ENCODE measurements at regions of chr11 and their contacts with region 1.

Region 1: GRCh38 chr11:130434521-130435223 is 6.3 kb upstream of the ADAMTS8 start:
- DNase-seq: peak; percentile 65
- H3K4me3 Mint-ChIP-seq: no peak overlapping the region
- H3K27ac Mint-ChIP-seq: no peak overlapping the region
- H3K4me1 Mint-ChIP-seq: peaks cover 27% of the 10 kb centered on the region
- H3K27me3 Mint-ChIP-seq: peaks cover 18% of the 10 kb centered on the region

Region 2: DNA sequence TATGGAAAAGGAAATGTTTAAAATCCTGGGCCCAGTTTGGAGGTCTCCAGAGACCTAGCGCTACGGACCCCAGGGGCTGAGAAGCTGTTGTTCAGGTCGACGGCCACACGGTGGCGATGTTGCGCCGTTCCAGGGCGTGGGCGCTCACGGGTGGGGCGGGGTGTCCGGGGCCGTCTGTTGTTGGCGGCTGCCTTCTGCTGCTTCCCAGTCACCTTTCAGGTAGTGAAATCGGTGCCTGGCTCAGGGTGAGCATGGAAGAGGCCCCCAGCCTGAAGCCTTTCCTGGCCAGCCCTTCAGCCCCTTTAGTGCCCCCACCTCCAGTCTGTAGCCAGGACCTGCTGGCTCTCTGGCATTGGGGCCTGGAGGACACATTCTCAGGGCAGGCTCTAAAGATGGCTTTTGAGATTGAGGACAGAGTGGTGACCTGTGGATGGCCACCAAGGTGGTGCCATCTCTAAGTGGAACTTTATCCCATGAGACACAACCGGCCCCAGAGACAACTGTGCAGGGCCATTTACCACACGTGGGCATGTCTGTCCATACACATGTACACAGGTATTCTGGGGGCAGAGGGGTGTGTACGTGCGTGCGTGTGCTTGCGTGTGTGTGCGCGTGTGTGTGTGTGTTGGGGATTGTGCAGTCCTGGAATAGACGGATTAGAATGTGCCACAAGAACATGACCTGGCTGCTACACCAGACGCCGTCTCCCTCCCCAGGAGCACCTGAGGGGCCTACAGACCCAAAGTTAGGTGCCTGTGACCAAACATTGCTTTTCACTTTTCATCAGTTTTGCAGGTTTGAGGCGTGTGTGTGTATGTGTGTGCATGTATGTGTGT is 221.3 kb before region 1 on chr11:
- intact Hi-C with region 1: loop called (anchors 2 kb)
- DNase-seq: peak; percentile 56
- H3K4me3 Mint-ChIP-seq: no peak overlapping the region
- H3K27ac Mint-ChIP-seq: no peak overlapping the region
- H3K4me1 Mint-ChIP-seq: no peaks in the 10 kb centered on the region
- H3K27me3 Mint-ChIP-seq: no peaks in the 10 kb centered on the region

Region 3: DNA sequence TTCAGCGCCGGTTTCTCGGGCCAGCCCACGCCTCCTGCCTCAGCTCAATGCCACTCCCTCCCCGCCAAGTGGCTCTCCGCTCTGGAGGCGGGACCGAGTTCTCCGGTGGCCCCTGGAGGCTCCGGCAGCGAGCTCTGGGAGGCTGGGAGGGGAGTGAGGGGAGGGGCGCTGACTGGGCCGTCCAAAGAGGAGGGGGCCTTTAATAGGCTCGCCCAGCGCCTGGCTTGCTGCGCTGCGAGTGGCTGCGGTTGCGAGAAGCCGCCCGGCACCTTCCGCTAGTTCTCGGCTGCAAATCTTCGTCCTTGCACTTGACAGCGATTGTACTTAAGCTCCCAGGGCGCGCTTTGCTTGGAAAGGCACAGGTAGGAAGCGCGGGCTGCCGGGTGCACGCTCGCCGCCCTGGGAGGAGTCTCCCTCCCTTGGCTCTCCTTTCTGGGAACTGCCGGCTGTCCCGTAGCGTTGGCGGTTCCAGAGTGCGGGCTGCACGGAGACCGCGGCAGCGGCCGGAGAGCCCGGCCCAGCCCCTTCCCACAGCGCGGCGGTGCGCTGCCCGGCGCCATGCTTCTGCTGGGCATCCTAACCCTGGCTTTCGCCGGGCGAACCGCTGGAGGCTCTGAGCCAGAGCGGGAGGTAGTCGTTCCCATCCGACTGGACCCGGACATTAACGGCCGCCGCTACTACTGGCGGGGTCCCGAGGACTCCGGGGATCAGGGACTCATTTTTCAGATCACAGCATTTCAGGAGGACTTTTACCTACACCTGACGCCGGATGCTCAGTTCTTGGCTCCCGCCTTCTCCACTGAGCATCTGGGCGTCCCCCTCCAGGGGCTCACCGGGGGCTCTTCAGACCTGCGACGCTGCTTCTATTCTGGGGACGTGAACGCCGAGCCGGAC is 14.0 kb after region 1 on chr11 and contains the start of gene ADAMTS15:
- intact Hi-C with region 1: loop called (anchors 2 kb)
- DNase-seq: peak; percentile 47
- H3K4me3 Mint-ChIP-seq: peak within 1 kb of the TSS; percentile 52
- H3K27ac Mint-ChIP-seq: no peak within 1 kb of the TSS
- H3K4me1 Mint-ChIP-seq: peaks cover 2% of the 10 kb centered on the region
- H3K27me3 Mint-ChIP-seq: peaks cover 51% of the 10 kb centered on the region
- total RNA-seq, gene ADAMTS15: not detected in 2 replicates

Region 4: DNA sequence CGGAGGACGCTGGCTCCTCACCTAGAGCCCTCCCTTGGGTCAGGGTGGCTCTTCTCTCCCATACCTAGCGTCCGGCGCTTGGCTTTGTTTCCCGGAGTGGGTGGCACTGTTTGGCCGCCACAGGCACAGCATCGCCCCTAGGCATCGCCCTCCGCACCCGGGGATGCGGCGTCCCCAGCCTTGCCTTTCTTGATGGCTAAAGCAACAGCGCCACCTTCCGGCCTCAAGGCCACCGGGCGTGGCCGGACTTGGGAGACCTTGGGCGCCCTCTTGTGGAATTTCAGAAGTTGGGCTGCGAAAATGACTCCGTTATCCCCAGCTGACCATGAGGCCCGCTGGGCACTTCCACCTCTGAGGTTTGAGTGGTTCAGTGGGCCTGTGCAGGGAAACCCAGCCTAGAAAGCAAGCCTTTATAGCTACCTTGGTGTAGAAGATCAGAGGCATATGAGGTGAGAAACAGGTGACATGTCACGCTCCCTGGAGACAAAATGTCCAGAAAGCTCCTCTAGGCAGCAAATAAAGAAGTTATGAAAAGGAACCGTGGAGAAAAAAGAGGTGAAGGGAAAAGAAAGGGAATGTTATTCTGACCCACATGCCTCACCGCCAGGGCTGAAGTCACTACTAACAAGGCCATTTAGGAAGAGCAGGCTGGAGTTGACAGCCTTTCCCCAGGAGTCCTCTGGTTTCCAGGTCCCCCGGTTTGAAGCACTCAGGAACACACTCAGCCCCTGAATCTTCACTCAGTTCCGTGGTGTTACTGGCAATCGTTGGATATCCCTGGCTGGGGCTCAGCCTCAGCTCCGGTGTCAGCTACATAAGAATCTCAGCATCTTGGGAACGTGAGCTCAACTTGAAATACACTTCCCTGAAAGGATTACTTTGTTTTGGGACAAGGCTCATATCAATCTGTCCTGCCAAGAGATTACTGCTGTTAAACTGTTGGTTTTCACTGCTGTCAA is 427.5 kb after region 1 on chr11:
- intact Hi-C with region 1: loop called (anchors 1 kb)
- DNase-seq: peak; percentile 79
- H3K4me3 Mint-ChIP-seq: no peak overlapping the region
- H3K27ac Mint-ChIP-seq: no peak overlapping the region
- H3K4me1 Mint-ChIP-seq: no peaks in the 10 kb centered on the region
- H3K27me3 Mint-ChIP-seq: peaks cover under 1% of the 10 kb centered on the region

Region 5: GRCh38 chr11:130894322-130895025 is 459.8 kb after region 1 on chr11:
- intact Hi-C with region 1: loop called (anchors 1 kb)
- DNase-seq: peak; percentile 51
- H3K4me3 Mint-ChIP-seq: no peak overlapping the region
- H3K27ac Mint-ChIP-seq: no peak overlapping the region
- H3K4me1 Mint-ChIP-seq: peaks cover 4% of the 10 kb centered on the region
- H3K27me3 Mint-ChIP-seq: no peaks in the 10 kb centered on the region

Region 6: GRCh38 chr11:130916238-130916855 is 481.7 kb after region 1 on chr11 and contains the start of gene SNX19:
- intact Hi-C with region 1: loop called (anchors 2 kb)
- DNase-seq: peak; percentile 89
- H3K4me3 Mint-ChIP-seq: peak within 1 kb of the TSS; percentile 81
- H3K27ac Mint-ChIP-seq: peak within 1 kb of the TSS; percentile 63
- H3K4me1 Mint-ChIP-seq: peaks cover 32% of the 10 kb centered on the region
- H3K27me3 Mint-ChIP-seq: peaks cover 9% of the 10 kb centered on the region
- total RNA-seq, gene SNX19: 42.1 and 48.7 TPM in 2 replicates

Region 7: GRCh38 chr11:131518305-131518838 is 1083.7 kb after region 1 on chr11:
- intact Hi-C with region 1: no loop called
- DNase-seq: no peak
- H3K4me3 Mint-ChIP-seq: no peak overlapping the region
- H3K27ac Mint-ChIP-seq: no peak overlapping the region
- H3K4me1 Mint-ChIP-seq: no peaks in the 10 kb centered on the region
- H3K27me3 Mint-ChIP-seq: no peaks in the 10 kb centered on the region